ENCODE measurements at regions of chr6 and their contacts with region 1.

Region 1: DNA sequence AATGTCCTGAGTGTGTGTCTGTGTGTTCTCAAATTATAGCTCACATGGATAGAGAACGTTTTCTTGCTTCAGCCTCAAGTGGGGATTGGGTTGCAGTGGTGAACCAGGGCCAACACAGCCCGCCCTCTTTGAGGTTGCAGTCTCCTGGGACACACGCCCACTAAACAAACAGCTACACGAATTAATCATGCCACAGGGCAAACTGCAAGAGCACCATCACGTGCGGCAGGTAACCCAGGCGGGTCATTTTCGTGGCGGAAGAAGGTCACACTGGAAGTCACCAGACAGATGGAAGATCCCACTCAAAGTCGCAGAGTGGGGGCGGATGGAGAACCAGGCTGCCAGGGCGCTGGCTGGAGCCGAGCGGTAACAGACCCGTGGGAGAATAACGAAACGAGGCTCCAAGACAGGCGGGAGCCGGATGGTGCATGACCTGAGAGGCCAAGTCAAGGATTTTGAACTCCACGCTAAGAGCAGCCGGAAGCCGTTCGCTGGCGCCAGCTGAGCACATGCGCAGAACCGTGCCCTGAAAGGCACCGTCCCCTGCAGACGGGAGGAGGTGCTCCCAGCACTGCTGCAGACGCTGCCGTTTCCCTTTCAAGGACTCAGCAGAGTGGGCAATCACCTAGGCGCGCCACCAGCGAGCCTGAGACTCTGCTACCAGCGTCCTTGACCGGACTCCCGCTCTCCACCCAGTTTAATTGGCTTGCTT is 10.7 kb downstream of the DLL1 start:
- DNase-seq: peak; percentile 58 to 70
- ATAC-seq: peak; percentile 48 to 79 (median 62)
- H3K4me3 ChIP-seq: peak overlapping the region in 8 of 10 donors; percentile 6 to 41 (median 36)
- H3K27ac ChIP-seq: peak overlapping the region in 8 of 10 donors; percentile 3 to 63 (median 47)
- H3K4me1 ChIP-seq: peaks cover 6 to 55% (median 41%) of the 10 kb centered on the region in 9 donors
- H3K27me3 ChIP-seq: peaks cover 0 to 1% (median 0%) of the 10 kb centered on the region in 7 donors
- CTCF ChIP-seq: peak in 1 of 9 donors; percentile 8

Region 2: DNA sequence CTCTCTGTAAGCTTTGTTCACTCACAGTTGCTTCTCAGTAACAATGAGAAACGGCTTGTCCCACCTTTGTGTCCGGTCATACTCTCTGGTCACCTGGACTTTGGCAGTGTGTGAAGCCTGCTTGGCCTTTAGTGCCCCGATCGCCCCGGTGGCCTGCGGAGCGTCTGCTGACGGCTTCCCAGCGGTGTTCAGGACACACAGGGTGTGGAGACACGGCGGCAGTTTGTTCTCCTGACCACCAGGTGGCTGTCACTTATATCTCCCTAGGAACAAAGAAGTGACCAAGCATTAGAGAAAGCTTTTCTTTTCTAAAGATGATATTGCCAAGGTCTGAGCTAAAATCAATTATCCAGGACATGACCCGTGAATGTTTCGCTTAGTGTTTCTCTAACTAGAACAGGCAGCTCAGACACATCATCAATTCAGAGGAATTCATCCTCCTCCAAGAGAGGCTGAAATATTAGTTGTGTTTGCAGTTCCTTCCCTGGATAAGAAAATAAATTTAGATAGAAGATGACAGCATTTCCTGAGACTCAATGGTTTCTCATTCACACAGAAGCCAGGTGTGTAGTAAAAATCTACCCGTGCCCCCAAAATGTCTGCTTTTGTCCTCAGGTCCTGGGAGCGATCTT is 859.1 kb before region 1 on chr6:
- intact Hi-C with region 1: no loop called
- DNase-seq: no peak
- ATAC-seq: peak in 3 of 8 donors; percentile 43 to 57 (median 48)
- H3K4me3 ChIP-seq: no peak overlapping the region
- H3K27ac ChIP-seq: no peak overlapping the region
- H3K4me1 ChIP-seq: no peaks in the 10 kb centered on the region
- H3K27me3 ChIP-seq: peaks cover 0 to 5% (median 0%) of the 10 kb centered on the region in 7 donors
- CTCF ChIP-seq: peak in 5 of 9 donors; percentile 22 to 65 (median 49)

Region 3: GRCh38 chr6:170011204-170012036 is 268.7 kb before region 1 on chr6:
- intact Hi-C with region 1: loop called in 1 of 10 experiments (anchors 5 kb)
- DNase-seq: peak; percentile 69 to 81
- ATAC-seq: peak; percentile 74 to 98 (median 92)
- H3K4me3 ChIP-seq: no peak overlapping the region
- H3K27ac ChIP-seq: peak overlapping the region; percentile 0 to 82 (median 61)
- H3K4me1 ChIP-seq: peaks cover 6 to 19% (median 15%) of the 10 kb centered on the region in 9 donors
- H3K27me3 ChIP-seq: peaks cover 0 to 7% (median 0%) of the 10 kb centered on the region in 7 donors
- CTCF ChIP-seq: peak in 1 of 9 donors; percentile 20

Region 4: DNA sequence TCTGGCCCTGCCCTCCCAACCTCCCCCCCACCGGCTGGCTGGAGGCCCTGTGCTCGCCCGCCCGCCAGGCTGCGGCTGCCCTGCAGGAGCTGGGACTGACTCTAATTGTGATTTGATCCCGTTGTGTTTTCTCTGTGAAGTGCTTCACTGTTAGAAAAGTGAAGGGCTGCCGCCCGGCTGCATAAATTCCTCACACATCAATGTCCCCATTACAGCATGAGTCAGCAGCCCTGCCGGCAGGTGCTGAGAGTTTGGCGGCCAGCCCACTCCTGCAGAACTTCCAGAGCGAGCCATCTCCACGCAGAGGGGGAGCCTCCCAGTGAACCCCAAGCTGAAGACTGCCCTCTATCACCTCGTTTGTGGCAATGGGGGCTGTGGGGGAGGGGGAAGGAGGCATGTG is 127.1 kb before region 1 on chr6:
- intact Hi-C with region 1: loop called in 1 of 10 experiments (anchors 10 kb)
- DNase-seq: no peak
- ATAC-seq: peak in 5 of 8 donors; percentile 13 to 48 (median 35)
- H3K4me3 ChIP-seq: peak overlapping the region in 4 of 10 donors; percentile 5 to 33 (median 20)
- H3K27ac ChIP-seq: peak overlapping the region; percentile 76 to 94 (median 85)
- H3K4me1 ChIP-seq: peaks cover 5 to 40% (median 29%) of the 10 kb centered on the region in 9 donors
- H3K27me3 ChIP-seq: peaks cover 0 to 26% (median 0%) of the 10 kb centered on the region in 7 donors
- CTCF ChIP-seq: no peak

Region 5: GRCh38 chr6:170165072-170165463 is 115.1 kb before region 1 on chr6:
- intact Hi-C with region 1: loop called in 2 of 10 experiments (anchors 5 to 10 kb)
- DNase-seq: peak; percentile 58 to 69
- ATAC-seq: peak; percentile 52 to 86 (median 78)
- H3K4me3 ChIP-seq: no peak overlapping the region
- H3K27ac ChIP-seq: peak overlapping the region in 8 of 10 donors; percentile 35 to 78 (median 62)
- H3K4me1 ChIP-seq: peaks cover 10 to 34% (median 27%) of the 10 kb centered on the region in 9 donors
- H3K27me3 ChIP-seq: peaks cover 0 to 14% (median 0%) of the 10 kb centered on the region in 7 donors
- CTCF ChIP-seq: peak in 7 of 9 donors; percentile 14 to 50 (median 44)

Region 6: GRCh38 chr6:170388113-170388512 is 108.0 kb after region 1 on chr6:
- intact Hi-C with region 1: no loop called
- DNase-seq: no peak
- ATAC-seq: no peak
- H3K4me3 ChIP-seq: no peak overlapping the region
- H3K27ac ChIP-seq: no peak overlapping the region
- H3K4me1 ChIP-seq: peaks cover 0 to 20% (median 8%) of the 10 kb centered on the region in 9 donors
- H3K27me3 ChIP-seq: no peaks in the 10 kb centered on the region
- CTCF ChIP-seq: no peak

Measured in heart right ventricle (tissue), 16 donors.